ENCODE measurements at regions of chr21 and their contacts with region 1.

Region 1: DNA sequence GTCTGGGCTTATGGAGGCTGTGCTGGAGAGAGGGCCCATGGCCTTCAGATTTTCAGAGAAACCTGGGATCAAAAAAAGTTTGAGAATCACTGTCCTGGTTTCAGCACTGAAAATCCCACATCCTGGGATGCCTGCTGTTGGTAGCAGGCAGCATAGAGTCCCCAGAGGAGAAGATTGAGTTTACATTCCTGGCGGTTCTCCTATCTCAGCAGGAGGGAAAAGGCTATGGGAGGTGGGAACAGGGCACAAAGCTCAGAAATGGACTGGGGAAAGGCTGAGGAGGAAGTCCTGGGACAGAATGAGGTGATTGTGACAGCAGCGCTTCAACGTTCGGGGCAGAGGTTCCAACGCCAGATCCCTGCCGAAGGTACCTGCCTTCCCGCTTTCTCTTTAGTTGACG is 103.4 kb downstream of the ETS2 start:
- DNase-seq: no peak
- H3K4me3 ChIP-seq: no peak overlapping the region
- H3K27ac ChIP-seq: peak overlapping the region; percentile 89 to 93 (median 92)
- H3K4me1 ChIP-seq: peaks cover 35 to 68% (median 52%) of the 10 kb centered on the region in 4 donors
- H3K27me3 ChIP-seq: no peaks in the 10 kb centered on the region
- CTCF ChIP-seq: no peak
- EP300 ChIP-seq: no peak
- POLR2A ChIP-seq: no peak

Region 2: DNA sequence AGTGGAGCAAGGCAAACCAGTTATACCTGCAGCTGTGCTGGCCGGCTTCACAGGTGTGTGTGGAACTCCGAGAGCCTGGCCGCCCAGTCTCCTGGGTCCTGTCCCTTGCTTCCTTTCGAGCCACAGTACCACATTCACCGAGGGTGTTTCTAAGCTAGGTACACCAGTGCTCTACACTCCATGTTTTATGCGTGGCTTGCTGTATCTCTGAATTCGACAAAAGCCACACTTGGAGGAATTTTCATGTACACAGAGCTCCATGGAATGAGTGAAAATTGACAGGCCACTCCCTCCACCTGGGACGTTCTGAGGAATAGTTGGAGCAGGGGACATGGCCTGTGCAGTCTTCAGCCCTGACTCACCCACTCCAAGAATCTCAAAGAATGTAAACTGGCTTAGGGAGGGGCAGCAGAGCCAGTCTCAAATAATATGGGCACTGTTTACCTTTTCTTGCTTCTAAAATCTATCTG is 89.4 kb before region 1 on chr21:
- in situ Hi-C with region 1: no loop called
- intact Hi-C with region 1: loop called (anchors 5 kb)
- DNase-seq: peak; percentile 68
- H3K4me3 ChIP-seq: no peak overlapping the region
- H3K27ac ChIP-seq: peak overlapping the region; percentile 72 to 84 (median 78)
- H3K4me1 ChIP-seq: peaks cover 33 to 93% (median 87%) of the 10 kb centered on the region in 4 donors
- H3K27me3 ChIP-seq: no peaks in the 10 kb centered on the region
- CTCF ChIP-seq: no peak
- EP300 ChIP-seq: peak; percentile 22
- POLR2A ChIP-seq: no peak